ENCODE measurements at regions of chr5 and their contacts with region 1.

Region 1: DNA sequence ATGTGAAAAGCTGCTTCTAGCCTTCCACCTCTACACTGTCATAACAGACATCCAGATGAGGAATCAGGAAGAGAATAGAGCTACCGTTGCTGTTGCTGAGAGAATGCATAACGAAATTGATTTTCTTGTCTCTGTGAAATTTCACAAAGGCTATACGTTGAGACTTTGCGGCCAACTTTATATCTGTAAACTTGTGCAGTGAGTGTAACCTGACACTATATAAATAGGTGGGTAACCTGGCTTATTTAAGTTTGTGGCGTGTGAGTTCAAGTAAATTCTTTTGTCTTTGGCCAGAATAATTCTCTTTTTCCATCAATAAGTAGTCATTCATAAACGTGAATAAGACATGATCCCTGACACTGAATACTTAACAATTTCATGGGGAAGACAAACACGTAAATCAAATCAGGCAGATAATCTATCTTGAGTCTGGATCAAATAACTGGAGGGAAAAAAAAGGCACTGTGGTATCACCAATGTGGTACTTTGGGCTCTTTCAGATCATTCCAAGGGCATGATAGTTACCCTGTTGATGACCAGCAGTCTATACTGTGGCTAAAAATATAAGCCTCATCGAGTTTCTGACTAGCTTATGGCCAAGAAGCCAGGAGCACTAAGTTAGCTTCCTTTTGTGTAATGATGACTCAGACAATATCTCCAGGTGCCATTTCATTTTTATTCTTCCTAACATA is 98.2 kb upstream of the RASA1 start:
- DNase-seq: no peak
- H3K4me3 Mint-ChIP-seq: peak overlapping the region; percentile 37
- H3K27ac Mint-ChIP-seq: peak overlapping the region; percentile 91
- H3K4me1 Mint-ChIP-seq: peaks cover 40% of the 10 kb centered on the region
- H3K27me3 Mint-ChIP-seq: no peaks in the 10 kb centered on the region
- CTCF ChIP-seq: no peak

Region 2: DNA sequence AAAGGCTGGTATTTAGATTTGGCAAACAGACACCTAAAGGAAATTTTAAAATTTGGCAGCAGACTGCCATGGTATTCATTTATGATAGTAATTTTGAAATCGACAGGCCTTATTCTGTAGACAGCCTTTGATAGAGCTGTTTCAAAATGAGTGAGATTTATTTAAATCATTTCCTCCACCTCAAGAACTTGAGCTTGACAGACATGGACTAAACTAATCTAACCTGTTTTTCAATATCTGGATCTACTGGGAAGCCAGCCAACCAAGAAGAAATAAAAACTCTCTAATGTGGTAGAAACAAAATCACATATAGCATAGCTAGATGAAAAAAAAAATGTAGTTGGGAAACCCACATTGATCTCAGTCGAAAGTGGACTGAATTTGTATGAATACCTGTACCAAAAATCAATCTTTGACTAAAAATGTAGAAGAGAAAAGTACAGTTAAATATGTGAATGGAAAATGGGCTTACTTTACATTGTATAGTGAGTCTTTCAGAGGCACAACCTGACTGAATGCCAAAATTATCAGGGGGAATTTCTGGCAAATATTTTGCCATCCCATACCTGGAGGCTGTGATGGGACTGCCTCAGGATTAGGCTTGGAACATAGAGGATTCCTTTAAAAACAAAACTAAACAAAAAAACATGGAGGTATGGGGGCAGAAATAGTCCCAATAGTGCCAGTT is 41.4 kb after region 1 on chr5:
- CTCF ChIA-PET with region 1: interaction called, 3 read pairs
- intact Hi-C with region 1: loop called (anchors 5 kb)
- DNase-seq: peak; percentile 58
- H3K4me3 Mint-ChIP-seq: peak overlapping the region; percentile 11
- H3K27ac Mint-ChIP-seq: peak overlapping the region; percentile 52
- H3K4me1 Mint-ChIP-seq: peaks cover 26% of the 10 kb centered on the region
- H3K27me3 Mint-ChIP-seq: no peaks in the 10 kb centered on the region
- CTCF ChIP-seq: no peak

Region 3: DNA sequence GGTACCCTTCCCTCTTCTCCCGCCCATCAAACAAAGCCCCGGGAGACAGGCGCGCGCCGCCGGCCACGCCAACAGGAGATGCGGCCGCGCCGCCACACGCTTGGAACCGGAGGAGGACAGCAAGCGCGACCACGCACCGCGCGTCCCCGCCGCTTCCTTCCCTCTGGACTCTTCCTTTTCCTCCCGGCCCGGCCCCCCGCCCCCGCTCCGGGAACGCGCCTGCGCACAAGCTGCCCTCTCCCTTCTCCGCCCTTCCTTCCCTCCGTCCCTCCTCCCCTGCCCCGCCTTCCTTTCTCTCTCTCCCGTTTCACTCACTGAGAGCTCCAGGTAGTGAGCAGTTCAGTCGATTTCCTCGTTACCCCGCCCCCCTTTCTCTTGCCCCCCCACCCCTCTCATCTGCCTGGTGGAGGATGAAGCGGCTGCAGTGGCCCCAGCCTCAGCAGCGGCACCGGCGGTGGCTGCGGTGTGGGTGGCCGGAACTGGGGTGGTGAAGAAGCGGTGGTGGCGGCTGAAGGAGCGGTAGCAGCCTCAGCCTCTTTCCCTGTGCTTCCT is 98.2 kb after region 1 on chr5 and contains the start of gene RASA1:
- CTCF ChIA-PET with region 1: interaction called, 3 read pairs
- intact Hi-C with region 1: loop called (anchors 5 kb)
- DNase-seq: peak; percentile 99
- H3K4me3 Mint-ChIP-seq: peak within 1 kb of the TSS; percentile 97
- H3K27ac Mint-ChIP-seq: peak within 1 kb of the TSS; percentile 93
- H3K4me1 Mint-ChIP-seq: peaks cover 31% of the 10 kb centered on the region
- H3K27me3 Mint-ChIP-seq: no peaks in the 10 kb centered on the region
- CTCF ChIP-seq: no peak
- total RNA-seq, gene RASA1: 163 and 193 TPM in 2 replicates